Activated T-helper 1 cell treated with anti-CD3 and anti-CD28 coated beads, Interleukin-12 subunit alpha, Interleukin-12 subunit beta, Interleukin-2, Interleukin-4 antibody, amounts not matched to agents 30 ng/mL and 10 ng/mL and 1 ng/mL, durations not matched to agents 14 hours and 24 hours and 36 hours (primary cell): ENCODE measurements at regions of chr17 and their contacts with region 1.

Region 1: GRCh38 chr17:50956750-50957523 is 90.8 kb upstream of the TOB1 start:
- DNase-seq: peak; percentile 51
- H3K4me3 Mint-ChIP-seq: no peak overlapping the region
- H3K27ac Mint-ChIP-seq: peak overlapping the region; percentile 48
- H3K4me1 Mint-ChIP-seq: peaks cover 5% of the 10 kb centered on the region
- H3K27me3 Mint-ChIP-seq: no peaks in the 10 kb centered on the region

Region 2: DNA sequence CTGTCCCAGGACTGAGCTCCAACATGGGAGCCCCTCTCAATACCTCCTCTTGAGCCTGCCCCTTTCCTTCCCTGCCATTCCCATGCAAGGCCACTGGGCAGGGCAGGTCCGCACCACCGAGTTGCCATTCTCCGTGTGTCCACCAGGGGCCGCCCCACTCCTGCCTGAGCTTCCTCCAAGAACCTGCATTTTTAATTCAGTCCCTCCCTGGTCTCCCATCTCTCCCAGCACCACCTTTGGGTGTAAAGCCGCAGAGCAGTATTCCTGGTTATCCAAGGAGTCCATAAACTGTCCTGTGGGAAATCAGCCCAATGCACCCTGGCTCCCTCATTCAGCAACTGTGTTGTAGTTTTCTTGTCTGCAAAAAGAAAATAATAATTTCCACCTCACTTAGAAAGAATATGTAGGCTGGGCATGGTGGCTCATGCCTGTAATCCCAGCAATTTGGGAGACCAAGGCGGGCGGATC is 173.7 kb before region 1 on chr17:
- intact Hi-C with region 1: loop called (anchors 1 kb)
- DNase-seq: peak; percentile 68
- H3K4me3 Mint-ChIP-seq: no peak overlapping the region
- H3K27ac Mint-ChIP-seq: no peak overlapping the region
- H3K4me1 Mint-ChIP-seq: peaks cover 27% of the 10 kb centered on the region
- H3K27me3 Mint-ChIP-seq: peaks cover 32% of the 10 kb centered on the region

Region 3: DNA sequence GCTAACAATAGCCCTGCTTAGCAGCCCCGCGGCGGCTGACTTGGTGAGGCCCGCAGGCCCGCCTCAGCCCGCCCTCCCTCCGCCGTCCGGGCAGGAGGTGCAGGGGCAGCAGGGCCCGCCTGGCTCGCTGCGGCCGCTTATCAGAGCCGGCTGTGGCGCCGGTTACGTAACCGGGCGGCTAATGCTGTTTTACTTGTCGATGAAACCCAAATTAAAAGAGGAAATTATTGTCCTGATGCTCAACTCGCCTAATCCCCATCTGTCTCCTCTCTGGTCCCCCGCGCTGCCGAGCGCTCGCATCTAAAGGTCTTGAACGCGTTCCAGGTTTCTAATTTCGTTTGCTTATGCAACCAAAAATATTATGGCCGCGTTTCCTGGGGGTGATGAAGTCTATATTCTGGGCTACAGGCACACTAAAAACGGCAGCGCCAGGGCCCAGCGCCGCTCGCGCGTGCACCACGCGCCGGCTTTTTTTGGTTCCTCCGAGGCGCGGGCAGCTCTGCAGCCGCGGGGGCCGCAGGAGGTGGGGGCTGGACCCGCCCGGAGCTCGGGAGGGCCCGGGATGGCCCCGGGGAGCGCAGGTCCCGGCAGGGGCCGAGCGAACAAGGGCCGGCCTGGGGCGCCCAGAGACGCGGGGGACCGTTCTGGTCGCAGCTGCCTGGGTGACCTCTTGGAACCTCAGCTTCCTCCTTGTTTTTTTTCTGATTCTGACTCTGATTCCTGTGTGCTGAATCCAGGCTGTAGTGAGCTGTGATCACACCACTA is 25.6 kb before region 1 on chr17:
- intact Hi-C with region 1: no loop called
- DNase-seq: peak; percentile 17
- H3K4me3 Mint-ChIP-seq: peak overlapping the region; percentile 63
- H3K27ac Mint-ChIP-seq: peak overlapping the region; percentile 43
- H3K4me1 Mint-ChIP-seq: peaks cover 17% of the 10 kb centered on the region
- H3K27me3 Mint-ChIP-seq: peaks cover 25% of the 10 kb centered on the region